ENCODE measurements at regions of chr7 and their contacts with region 1.

Region 1: DNA sequence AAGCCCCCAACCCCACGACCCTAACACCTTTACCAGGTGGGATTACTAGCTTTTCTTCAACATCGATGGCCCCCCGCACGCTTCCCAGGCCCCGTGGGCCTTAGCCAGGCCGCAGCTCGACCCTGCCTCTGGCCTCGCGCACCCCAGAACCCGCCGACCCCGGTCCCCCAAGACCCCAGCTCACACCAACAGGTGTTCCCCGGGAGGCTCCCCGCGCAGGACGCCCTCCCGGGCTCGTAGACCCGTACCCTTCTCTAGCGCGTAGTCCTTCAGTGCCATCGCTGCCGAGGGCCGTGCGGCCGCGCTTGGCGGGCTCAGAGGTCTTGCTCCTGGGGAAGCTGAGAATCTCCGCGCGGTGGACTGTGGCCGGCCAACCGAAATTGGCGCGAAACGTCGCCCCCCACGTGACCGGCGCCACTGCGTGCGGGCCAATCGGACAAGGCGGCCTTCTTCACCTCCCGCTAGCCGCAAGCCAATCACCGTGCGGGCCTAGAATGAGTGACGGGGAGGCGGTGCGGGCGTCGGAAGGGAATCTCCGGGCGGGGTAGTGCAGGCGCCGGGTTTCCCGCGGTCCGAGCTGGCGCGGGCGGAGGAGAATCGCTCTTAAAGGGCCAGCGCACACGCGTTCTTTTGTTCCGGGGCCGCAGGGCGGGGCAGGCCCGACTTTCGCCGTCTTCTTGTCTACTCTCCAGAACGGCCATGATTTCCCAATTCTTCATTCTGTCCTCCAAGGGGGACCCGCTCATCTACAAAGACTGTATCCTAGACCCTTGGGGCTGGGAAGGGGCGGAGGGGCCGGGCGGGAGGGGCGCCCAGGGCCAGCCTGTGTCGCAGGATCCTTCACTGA is at the starts of genes AP4M1 and MCM7:
- DNase-seq: peak; percentile 94

Region 2: DNA sequence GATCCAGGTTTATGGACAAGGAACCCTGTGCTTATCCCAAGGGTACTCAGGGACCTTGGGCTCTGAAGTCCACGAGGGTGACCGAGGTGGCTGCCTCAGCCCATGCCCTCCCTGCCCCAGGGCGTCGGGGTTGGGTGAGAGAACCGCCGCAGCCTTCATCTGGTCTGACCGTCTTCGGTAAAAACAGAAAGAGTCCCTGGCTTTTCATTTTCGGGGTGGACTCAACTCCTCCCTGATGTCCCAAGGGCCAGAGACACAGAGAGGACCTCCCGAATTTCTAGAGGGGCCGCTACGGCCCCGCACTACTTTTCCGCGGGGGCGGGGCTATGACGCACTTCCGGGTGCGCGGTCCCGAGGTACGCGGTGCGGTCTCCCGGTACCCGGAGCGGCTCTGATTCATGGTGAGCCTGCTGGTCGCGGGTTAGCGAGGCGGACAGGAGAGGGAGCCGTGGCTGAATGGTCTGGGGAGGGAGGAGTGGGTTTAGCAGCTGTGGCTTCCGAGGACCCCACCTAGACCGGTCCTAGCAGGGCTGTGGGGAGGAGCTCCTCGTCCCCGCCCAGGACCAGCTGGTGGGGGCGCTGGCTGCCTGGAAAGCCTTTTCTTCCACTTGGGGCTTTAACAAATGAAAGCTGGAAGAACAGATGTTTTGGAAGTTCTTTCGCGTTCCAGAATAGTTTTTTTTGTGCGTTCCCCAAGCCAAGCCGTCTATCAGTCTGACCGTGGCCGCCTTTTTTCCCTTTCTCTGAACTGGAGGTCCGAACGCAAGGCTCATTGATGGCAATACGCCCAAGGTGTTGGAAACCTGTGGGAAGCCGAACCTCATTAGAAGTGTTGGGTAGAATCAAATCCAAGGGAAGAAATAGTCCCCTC is 51.6 kb before region 1 on chr7 and contains the start of gene ZSCAN21:
- CTCF ChIA-PET with region 1: no interaction called
- POLR2A ChIA-PET with region 1: interaction called, 12 read pairs
- DNase-seq: peak; percentile 89

Region 3: GRCh38 chr7:100069991-100070390 is 31.2 kb before region 1 on chr7:
- CTCF ChIA-PET with region 1: no interaction called
- POLR2A ChIA-PET with region 1: no interaction called
- DNase-seq: no peak

Region 4: DNA sequence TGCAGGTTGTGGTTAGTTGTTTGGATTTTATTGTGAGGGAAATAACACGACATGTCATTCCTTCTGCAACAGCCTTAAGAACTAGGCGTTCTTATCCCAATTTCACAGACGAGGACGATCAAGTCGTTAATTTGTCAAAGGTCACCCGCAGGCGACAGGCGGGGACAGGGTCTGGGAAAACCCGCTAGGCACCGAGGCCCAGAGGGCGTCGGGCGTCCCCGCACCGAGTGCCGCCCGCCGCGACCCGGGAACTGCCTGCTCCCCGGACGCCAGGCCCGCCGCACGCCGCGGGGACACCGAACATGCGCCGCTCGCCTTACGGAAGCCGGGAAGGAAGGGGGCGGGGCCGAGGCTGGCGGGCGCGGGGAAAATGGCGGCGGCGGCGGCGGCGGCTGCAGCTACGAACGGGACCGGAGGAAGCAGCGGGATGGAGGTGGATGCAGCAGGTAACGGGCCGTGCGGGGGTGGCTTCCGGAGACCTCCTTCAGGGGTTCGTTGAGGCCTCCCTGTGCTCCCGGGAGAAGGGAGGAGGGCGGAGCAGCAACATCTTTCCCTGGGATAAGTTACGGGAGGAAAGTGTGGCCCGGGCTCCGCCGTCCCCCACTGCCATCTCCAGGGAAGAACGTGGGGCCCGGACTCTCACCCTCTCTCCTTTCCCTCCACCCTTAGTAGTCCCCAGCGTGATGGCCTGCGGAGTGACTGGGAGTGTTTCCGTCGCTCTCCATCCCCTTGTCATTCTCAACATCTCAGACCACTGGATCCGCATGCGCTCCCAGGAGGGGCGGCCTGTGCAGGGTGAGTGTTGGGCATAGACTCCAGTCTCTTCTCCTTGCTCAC is 12.4 kb before region 1 on chr7 and contains the start of gene COPS6:
- CTCF ChIA-PET with region 1: interaction called, 4 read pairs
- POLR2A ChIA-PET with region 1: interaction called, 100 read pairs
- DNase-seq: peak; percentile 67

Region 5: DNA sequence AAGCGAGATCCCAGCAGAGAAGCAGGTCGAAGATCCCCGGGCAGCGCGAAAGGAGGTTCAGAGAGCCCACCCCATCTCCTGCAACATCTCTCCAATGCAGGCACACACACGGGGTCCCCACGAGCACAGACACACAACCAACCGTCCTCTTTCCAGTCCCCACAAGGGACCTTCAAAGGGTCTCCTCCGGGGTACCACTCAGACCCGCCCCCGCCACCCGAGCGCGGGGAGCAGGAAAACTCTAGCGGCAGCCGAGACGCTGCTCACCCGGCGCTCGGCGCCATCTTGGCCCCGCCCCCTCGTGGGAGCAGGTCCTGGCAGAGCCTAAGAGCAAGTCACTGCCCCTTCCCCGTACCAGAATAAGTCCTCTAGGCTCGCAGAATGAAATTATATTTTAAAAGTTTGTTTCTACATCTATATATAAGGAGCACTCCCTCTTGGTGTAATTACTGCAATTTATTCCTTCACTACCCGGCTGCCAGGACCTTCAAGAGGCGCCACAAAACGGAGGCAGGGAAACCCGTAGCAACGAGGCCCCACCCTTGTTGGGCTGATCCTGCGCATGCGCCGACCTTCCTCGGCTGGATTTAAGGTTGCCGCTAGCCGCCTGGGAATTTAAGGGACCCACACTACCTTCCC is 17.9 kb after region 1 on chr7 and contains the starts of genes CNPY4 and TAF6:
- CTCF ChIA-PET with region 1: interaction called, 3 read pairs
- POLR2A ChIA-PET with region 1: interaction called, 80 read pairs
- DNase-seq: peak; percentile 98

Region 6: DNA sequence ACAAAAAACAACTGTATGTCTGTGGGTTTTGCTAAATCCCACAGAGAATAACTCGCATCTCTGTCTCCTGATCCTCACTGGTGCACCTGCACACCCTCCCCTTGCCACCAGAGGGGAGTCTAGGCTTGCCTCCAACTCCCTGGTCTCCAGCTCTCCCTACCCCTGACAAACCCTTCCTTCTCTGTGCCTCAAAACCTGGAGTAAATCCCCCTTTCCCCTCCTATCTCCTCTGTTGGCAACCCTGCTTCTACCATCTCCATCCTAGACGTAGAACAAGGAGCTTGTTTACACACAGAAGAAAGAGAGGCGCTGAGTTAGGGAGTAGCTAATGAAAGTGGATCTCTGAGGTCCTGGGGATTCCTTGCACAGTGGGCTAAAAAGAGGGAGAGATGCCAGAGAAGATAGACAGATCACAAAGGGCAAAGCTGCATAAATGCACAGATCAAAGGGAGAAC is 31.5 kb after region 1 on chr7:
- CTCF ChIA-PET with region 1: interaction called, 8 read pairs
- POLR2A ChIA-PET with region 1: interaction called, 16 read pairs
- DNase-seq: peak; percentile 78